CD8-positive, alpha-beta T cell (primary cell): ENCODE measurements at regions of chr11 and their contacts with region 1.

Region 1: DNA sequence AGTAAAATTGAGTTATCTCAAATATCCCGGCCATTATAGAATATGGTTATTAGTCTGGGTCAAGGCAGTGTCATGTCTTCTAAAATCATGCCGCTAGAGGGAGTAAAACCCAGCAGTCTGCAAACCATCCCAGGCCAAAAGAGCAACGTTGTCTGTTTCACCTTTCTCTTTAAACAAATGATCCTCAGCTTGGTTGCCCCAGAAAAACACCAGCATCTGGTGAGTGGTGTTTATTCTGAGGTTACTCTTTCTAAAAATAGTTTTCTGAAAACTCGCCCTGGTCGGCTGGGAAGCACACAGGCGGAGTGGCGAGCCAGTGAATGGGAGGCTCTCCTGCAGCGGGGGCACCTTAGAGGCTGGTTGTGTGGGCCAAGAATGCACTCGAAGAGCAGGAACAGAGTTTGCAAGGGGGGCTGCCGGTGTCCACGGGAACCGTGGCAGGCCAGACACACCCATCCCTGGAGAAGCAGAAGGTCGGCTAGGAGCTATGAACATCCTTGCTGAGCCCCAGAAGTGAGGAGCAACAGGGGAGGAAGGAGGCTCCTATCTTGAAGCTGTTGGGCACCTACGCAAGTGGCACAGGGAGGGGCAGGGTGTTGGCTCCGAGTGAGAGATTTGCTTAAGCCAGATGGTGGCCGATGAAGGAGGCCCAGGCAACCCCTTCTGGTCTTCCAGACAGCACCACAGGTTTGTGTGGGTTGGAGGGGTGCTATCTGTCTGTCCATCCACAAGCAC is 297.1 kb downstream of the ETS1 start:
- DNase-seq: peak; percentile 48 to 94 (median 71)
- ATAC-seq: peak; percentile 67
- H3K4me3 ChIP-seq: peak overlapping the region; percentile 46 to 51
- H3K4me3 Mint-ChIP-seq: peak overlapping the region; percentile 88
- H3K27ac ChIP-seq: peak overlapping the region; percentile 89 to 90
- H3K27ac Mint-ChIP-seq: peak overlapping the region; percentile 100
- H3K4me1 ChIP-seq: peaks cover 79% of the 10 kb centered on the region
- H3K4me1 Mint-ChIP-seq: peaks cover 92% of the 10 kb centered on the region
- H3K27me3 ChIP-seq: no peaks in the 10 kb centered on the region
- H3K27me3 Mint-ChIP-seq: no peaks in the 10 kb centered on the region
- CTCF ChIP-seq: peak; percentile 92

Region 2: GRCh38 chr11:128039140-128040021 is 250.9 kb before region 1 on chr11:
- CTCF ChIA-PET with region 1: interaction called, 3 read pairs
- POLR2A ChIA-PET with region 1: no interaction called
- intact Hi-C with region 1: loop called in 1 of 2 experiments (anchors 5 kb)
- DNase-seq: peak; percentile 48 to 94 (median 79)
- ATAC-seq: peak; percentile 91
- H3K4me3 ChIP-seq: peak overlapping the region; percentile 40 to 50
- H3K4me3 Mint-ChIP-seq: peak overlapping the region; percentile 59
- H3K27ac ChIP-seq: peak overlapping the region; percentile 55 to 80
- H3K27ac Mint-ChIP-seq: peak overlapping the region; percentile 87
- H3K4me1 ChIP-seq: peaks cover 76% of the 10 kb centered on the region
- H3K4me1 Mint-ChIP-seq: peaks cover 56% of the 10 kb centered on the region
- H3K27me3 ChIP-seq: no peaks in the 10 kb centered on the region
- H3K27me3 Mint-ChIP-seq: no peaks in the 10 kb centered on the region
- CTCF ChIP-seq: peak; percentile 22

Region 3: DNA sequence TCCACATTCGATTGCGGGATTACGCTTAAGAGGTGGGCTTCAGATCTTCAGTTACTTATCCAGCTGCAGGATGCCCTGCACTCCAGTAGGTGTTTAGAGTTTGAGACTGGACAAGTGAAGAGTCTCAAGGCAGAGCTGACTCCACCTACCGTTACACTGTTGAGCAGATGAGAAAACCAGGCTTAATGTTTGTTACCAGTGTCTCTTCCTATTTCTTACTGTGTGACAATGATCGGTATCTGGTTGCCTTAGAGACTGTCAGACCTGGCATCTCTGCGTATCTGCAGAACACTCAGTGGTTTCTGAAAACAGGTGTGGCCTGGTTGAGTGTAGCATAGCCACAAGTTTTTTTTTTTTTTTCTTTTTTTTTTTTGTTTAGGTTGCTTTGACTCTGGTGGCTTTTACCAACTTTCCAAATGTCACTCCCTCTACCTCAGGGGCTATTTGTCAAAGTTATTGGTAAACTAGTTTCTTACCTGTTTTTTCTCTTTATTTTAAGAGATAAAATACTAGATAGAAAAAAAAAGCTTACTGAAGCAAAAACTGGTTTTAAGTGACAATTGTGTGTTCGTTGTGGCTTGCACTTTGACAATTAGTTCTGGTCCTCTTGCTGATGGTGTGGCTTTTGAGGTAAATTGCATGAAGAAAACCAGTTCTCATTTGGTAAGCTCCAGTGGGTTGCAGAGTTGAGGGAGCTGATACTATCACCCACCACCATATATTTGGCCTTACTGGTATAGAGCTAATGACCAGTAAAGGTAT is 12.3 kb after region 1 on chr11:
- CTCF ChIA-PET with region 1: interaction called, 27 read pairs
- POLR2A ChIA-PET with region 1: interaction called, 58 read pairs
- intact Hi-C with region 1: loop called (anchors 1 kb)
- DNase-seq: peak; percentile 49 to 97 (median 72)
- ATAC-seq: peak; percentile 85
- H3K4me3 ChIP-seq: peak overlapping the region; percentile 46 to 51
- H3K4me3 Mint-ChIP-seq: peak overlapping the region; percentile 88
- H3K27ac ChIP-seq: peak overlapping the region; percentile 87 to 89
- H3K27ac Mint-ChIP-seq: peak overlapping the region; percentile 99
- H3K4me1 ChIP-seq: peaks cover 88% of the 10 kb centered on the region
- H3K4me1 Mint-ChIP-seq: peaks cover 92% of the 10 kb centered on the region
- H3K27me3 ChIP-seq: no peaks in the 10 kb centered on the region
- H3K27me3 Mint-ChIP-seq: no peaks in the 10 kb centered on the region
- CTCF ChIP-seq: no peak

Region 4: GRCh38 chr11:128422576-128423370 is 132.5 kb after region 1 on chr11:
- CTCF ChIA-PET with region 1: interaction called, 4 read pairs
- POLR2A ChIA-PET with region 1: no interaction called
- intact Hi-C with region 1: loop called in 1 of 2 experiments (anchors 1 kb)
- DNase-seq: peak; percentile 70 to 95 (median 87)
- ATAC-seq: peak; percentile 95
- H3K4me3 ChIP-seq: peak overlapping the region in 1 of 2 experiments; percentile 0
- H3K4me3 Mint-ChIP-seq: peak overlapping the region; percentile 53
- H3K27ac ChIP-seq: peak overlapping the region; percentile 18 to 41
- H3K27ac Mint-ChIP-seq: peak overlapping the region; percentile 97
- H3K4me1 ChIP-seq: peaks cover 41% of the 10 kb centered on the region
- H3K4me1 Mint-ChIP-seq: peaks cover 51% of the 10 kb centered on the region
- H3K27me3 ChIP-seq: no peaks in the 10 kb centered on the region
- H3K27me3 Mint-ChIP-seq: no peaks in the 10 kb centered on the region
- CTCF ChIP-seq: no peak

Region 5: DNA sequence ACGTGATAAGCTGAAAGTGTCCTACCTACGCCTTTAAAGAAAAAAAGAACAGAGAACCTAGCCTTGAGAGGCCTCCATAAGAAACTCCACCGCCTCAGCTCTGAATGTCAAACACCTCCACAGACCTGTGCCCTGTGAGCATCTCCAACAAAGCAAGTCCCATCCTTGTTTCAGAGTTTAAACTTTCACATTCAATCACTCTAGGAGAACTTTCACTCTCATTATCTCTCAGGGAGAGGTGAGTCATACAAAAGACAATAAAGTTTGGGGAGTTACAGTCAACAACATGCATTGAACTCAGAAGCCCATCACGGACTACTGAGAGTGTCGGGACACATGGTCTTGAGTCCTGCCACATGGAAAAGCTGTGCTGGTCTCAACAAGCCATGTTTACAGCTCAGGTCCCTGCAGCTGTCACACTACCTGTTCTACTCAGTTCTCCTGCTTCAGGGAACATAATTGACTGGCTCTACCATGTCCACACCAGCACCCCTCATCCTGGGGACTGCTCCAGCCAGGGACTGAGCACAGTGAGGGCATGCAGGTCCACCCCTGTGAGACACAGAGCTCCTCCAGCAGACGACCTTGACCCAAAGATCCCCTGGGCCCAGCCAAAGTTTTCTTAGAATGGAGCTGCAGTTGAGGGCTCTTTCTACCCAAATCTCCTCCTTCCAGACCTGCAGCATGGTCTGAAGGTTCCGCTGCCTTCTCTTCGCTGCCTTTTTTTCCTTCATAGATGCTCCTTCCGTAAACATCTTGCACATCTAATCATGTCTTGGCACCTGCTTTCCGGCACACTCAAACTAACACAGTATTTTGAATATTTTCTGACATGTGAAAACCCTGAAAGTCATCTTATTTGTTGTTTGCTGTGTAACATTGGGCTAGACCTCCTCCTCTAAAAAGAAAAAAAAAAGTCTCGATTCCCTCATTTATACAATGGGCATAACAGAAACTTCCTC is 182.1 kb after region 1 on chr11:
- CTCF ChIA-PET with region 1: interaction called, 47 read pairs
- POLR2A ChIA-PET with region 1: interaction called, 37 read pairs
- intact Hi-C with region 1: loop called (anchors 1 to 2 kb)
- DNase-seq: peak in 5 of 9 experiments; percentile 46 to 81 (median 63)
- ATAC-seq: peak; percentile 33
- H3K4me3 ChIP-seq: peak overlapping the region; percentile 4 to 33
- H3K4me3 Mint-ChIP-seq: peak overlapping the region; percentile 74
- H3K27ac ChIP-seq: peak overlapping the region; percentile 68 to 88
- H3K27ac Mint-ChIP-seq: peak overlapping the region; percentile 94
- H3K4me1 ChIP-seq: peaks cover 99% of the 10 kb centered on the region
- H3K4me1 Mint-ChIP-seq: peaks cover 99% of the 10 kb centered on the region
- H3K27me3 ChIP-seq: no peaks in the 10 kb centered on the region
- H3K27me3 Mint-ChIP-seq: no peaks in the 10 kb centered on the region
- CTCF ChIP-seq: no peak

Region 6: GRCh38 chr11:128506999-128507611 is 216.8 kb after region 1 on chr11:
- CTCF ChIA-PET with region 1: interaction called, 21 read pairs
- POLR2A ChIA-PET with region 1: interaction called, 10 read pairs
- intact Hi-C with region 1: loop called (anchors 5 kb)
- DNase-seq: peak in 4 of 9 experiments; percentile 51 to 65 (median 60)
- ATAC-seq: peak; percentile 30
- H3K4me3 ChIP-seq: peak overlapping the region; percentile 37 to 94
- H3K4me3 Mint-ChIP-seq: peak overlapping the region; percentile 84
- H3K27ac ChIP-seq: peak overlapping the region; percentile 48 to 75
- H3K27ac Mint-ChIP-seq: peak overlapping the region; percentile 98
- H3K4me1 ChIP-seq: peaks cover 100% of the 10 kb centered on the region
- H3K4me1 Mint-ChIP-seq: peaks cover 97% of the 10 kb centered on the region
- H3K27me3 ChIP-seq: no peaks in the 10 kb centered on the region
- H3K27me3 Mint-ChIP-seq: no peaks in the 10 kb centered on the region
- CTCF ChIP-seq: no peak

Region 7: GRCh38 chr11:128831174-128832120 is 541.2 kb after region 1 on chr11:
- CTCF ChIA-PET with region 1: interaction called, 3 read pairs
- POLR2A ChIA-PET with region 1: no interaction called
- intact Hi-C with region 1: loop called in 1 of 2 experiments (anchors 5 kb)
- DNase-seq: peak; percentile 75 to 93 (median 88)
- ATAC-seq: peak; percentile 81
- H3K4me3 ChIP-seq: peak overlapping the region; percentile 11 to 26
- H3K4me3 Mint-ChIP-seq: peak overlapping the region; percentile 55
- H3K27ac ChIP-seq: peak overlapping the region; percentile 31 to 84
- H3K27ac Mint-ChIP-seq: peak overlapping the region; percentile 80
- H3K4me1 ChIP-seq: peaks cover 9% of the 10 kb centered on the region
- H3K4me1 Mint-ChIP-seq: peaks cover 18% of the 10 kb centered on the region
- H3K27me3 ChIP-seq: no peaks in the 10 kb centered on the region
- H3K27me3 Mint-ChIP-seq: no peaks in the 10 kb centered on the region
- CTCF ChIP-seq: peak; percentile 87